ENCODE measurements at regions of chr1 and their contacts with region 1.

Region 1: GRCh38 chr1:230310381-230311163 is 115.6 kb downstream of the PGBD5 start:
- DNase-seq: peak; percentile 96
- H3K4me3 Mint-ChIP-seq: no peak overlapping the region
- H3K27ac Mint-ChIP-seq: no peak overlapping the region
- H3K4me1 Mint-ChIP-seq: peaks cover 34% of the 10 kb centered on the region
- H3K27me3 Mint-ChIP-seq: peaks cover 15% of the 10 kb centered on the region
- CTCF ChIP-seq: peak; percentile 99

Region 2: DNA sequence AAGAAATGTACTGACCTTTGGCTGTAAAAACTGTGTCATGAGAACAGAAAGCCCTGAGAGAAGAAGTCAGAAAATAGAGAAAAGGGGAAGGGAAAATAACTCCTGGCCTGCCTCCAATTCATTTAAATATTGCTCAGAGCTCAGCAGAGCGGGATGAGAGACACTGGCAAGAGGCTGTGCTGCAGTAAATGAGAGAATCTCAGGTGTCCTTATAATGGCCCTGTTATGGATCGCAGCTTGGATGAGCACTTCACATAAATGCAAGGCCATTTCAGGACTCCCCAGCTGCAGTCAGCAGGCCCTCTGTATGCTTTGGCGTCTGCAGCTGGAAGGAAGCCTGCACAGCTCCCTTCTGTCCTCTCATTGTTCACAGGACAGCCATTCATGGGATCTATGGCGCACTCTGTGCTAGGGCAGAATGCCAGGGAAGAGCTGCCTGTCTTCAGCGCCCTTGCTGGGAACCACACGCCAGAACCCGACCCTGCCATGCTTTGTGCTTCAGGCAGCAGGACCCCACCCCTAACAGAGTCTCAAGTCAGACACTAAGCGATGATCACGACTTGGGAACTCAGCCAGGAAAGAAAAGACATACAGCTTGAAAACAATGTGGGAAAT is 731.4 kb before region 1 on chr1:
- CTCF ChIA-PET with region 1: interaction called, 3 read pairs
- POLR2A ChIA-PET with region 1: no interaction called
- intact Hi-C with region 1: loop called (anchors 5 kb)
- DNase-seq: peak; percentile 38
- H3K4me3 Mint-ChIP-seq: no peak overlapping the region
- H3K27ac Mint-ChIP-seq: no peak overlapping the region
- H3K4me1 Mint-ChIP-seq: peaks cover 11% of the 10 kb centered on the region
- H3K27me3 Mint-ChIP-seq: no peaks in the 10 kb centered on the region
- CTCF ChIP-seq: no peak

Region 3: GRCh38 chr1:229714964-229715603 is 595.5 kb before region 1 on chr1:
- CTCF ChIA-PET with region 1: interaction called, 29 read pairs
- POLR2A ChIA-PET with region 1: no interaction called
- intact Hi-C with region 1: loop called (anchors 1 kb)
- DNase-seq: peak; percentile 83
- H3K4me3 Mint-ChIP-seq: no peak overlapping the region
- H3K27ac Mint-ChIP-seq: peak overlapping the region; percentile 17
- H3K4me1 Mint-ChIP-seq: no peaks in the 10 kb centered on the region
- H3K27me3 Mint-ChIP-seq: no peaks in the 10 kb centered on the region
- CTCF ChIP-seq: peak; percentile 88

Region 4: GRCh38 chr1:229887043-229887822 is 423.3 kb before region 1 on chr1:
- CTCF ChIA-PET with region 1: interaction called, 3 read pairs
- POLR2A ChIA-PET with region 1: no interaction called
- intact Hi-C with region 1: loop called (anchors 10 kb)
- DNase-seq: peak; percentile 97
- H3K4me3 Mint-ChIP-seq: no peak overlapping the region
- H3K27ac Mint-ChIP-seq: peak overlapping the region; percentile 71
- H3K4me1 Mint-ChIP-seq: peaks cover 30% of the 10 kb centered on the region
- H3K27me3 Mint-ChIP-seq: peaks cover 8% of the 10 kb centered on the region
- CTCF ChIP-seq: no peak

Region 5: GRCh38 chr1:230104395-230105244 is 206.0 kb before region 1 on chr1:
- CTCF ChIA-PET with region 1: interaction called, 4 read pairs
- POLR2A ChIA-PET with region 1: interaction called, 11 read pairs
- intact Hi-C with region 1: loop called (anchors 5 kb)
- DNase-seq: peak; percentile 100
- H3K4me3 Mint-ChIP-seq: peak overlapping the region; percentile 61
- H3K27ac Mint-ChIP-seq: peak overlapping the region; percentile 65
- H3K4me1 Mint-ChIP-seq: peaks cover 67% of the 10 kb centered on the region
- H3K27me3 Mint-ChIP-seq: no peaks in the 10 kb centered on the region
- CTCF ChIP-seq: peak; percentile 4

Region 6: GRCh38 chr1:230149751-230150584 is 160.6 kb before region 1 on chr1:
- CTCF ChIA-PET with region 1: no interaction called
- POLR2A ChIA-PET with region 1: no interaction called
- intact Hi-C with region 1: no loop called
- DNase-seq: no peak
- H3K4me3 Mint-ChIP-seq: no peak overlapping the region
- H3K27ac Mint-ChIP-seq: no peak overlapping the region
- H3K4me1 Mint-ChIP-seq: peaks cover 24% of the 10 kb centered on the region
- H3K27me3 Mint-ChIP-seq: no peaks in the 10 kb centered on the region
- CTCF ChIP-seq: no peak

Region 7: GRCh38 chr1:230335861-230336522 is 25.4 kb after region 1 on chr1:
- CTCF ChIA-PET with region 1: no interaction called
- POLR2A ChIA-PET with region 1: no interaction called
- intact Hi-C with region 1: no loop called
- DNase-seq: no peak
- H3K4me3 Mint-ChIP-seq: no peak overlapping the region
- H3K27ac Mint-ChIP-seq: no peak overlapping the region
- H3K4me1 Mint-ChIP-seq: no peaks in the 10 kb centered on the region
- H3K27me3 Mint-ChIP-seq: no peaks in the 10 kb centered on the region
- CTCF ChIP-seq: no peak

Region 8: GRCh38 chr1:230391781-230392535 is 81.4 kb after region 1 on chr1:
- CTCF ChIA-PET with region 1: no interaction called
- POLR2A ChIA-PET with region 1: no interaction called
- intact Hi-C with region 1: no loop called
- DNase-seq: no peak
- H3K4me3 Mint-ChIP-seq: no peak overlapping the region
- H3K27ac Mint-ChIP-seq: no peak overlapping the region
- H3K4me1 Mint-ChIP-seq: no peaks in the 10 kb centered on the region
- H3K27me3 Mint-ChIP-seq: peaks cover 11% of the 10 kb centered on the region
- CTCF ChIP-seq: no peak

Measured in MCF 10A (cell line).